ENCODE measurements at regions of chr3 and their contacts with region 1.

Region 1: GRCh38 chr3:161274719-161275298 is 53.7 kb downstream of the NMD3 start:
- DNase-seq: no peak
- H3K4me3 ChIP-seq: no peak overlapping the region
- H3K27ac ChIP-seq: no peak overlapping the region
- H3K4me1 ChIP-seq: no peaks in the 10 kb centered on the region
- H3K27me3 ChIP-seq: no peaks in the 10 kb centered on the region
- CTCF ChIP-seq: peak; percentile 63

Region 2: GRCh38 chr3:160956806-160957205 is 318.0 kb before region 1 on chr3:
- intact Hi-C with region 1: no loop called
- DNase-seq: no peak
- H3K4me3 ChIP-seq: no peak overlapping the region
- H3K27ac ChIP-seq: no peak overlapping the region
- H3K4me1 ChIP-seq: peaks cover 20% of the 10 kb centered on the region
- H3K27me3 ChIP-seq: no peaks in the 10 kb centered on the region
- CTCF ChIP-seq: peak; percentile 43

Region 3: DNA sequence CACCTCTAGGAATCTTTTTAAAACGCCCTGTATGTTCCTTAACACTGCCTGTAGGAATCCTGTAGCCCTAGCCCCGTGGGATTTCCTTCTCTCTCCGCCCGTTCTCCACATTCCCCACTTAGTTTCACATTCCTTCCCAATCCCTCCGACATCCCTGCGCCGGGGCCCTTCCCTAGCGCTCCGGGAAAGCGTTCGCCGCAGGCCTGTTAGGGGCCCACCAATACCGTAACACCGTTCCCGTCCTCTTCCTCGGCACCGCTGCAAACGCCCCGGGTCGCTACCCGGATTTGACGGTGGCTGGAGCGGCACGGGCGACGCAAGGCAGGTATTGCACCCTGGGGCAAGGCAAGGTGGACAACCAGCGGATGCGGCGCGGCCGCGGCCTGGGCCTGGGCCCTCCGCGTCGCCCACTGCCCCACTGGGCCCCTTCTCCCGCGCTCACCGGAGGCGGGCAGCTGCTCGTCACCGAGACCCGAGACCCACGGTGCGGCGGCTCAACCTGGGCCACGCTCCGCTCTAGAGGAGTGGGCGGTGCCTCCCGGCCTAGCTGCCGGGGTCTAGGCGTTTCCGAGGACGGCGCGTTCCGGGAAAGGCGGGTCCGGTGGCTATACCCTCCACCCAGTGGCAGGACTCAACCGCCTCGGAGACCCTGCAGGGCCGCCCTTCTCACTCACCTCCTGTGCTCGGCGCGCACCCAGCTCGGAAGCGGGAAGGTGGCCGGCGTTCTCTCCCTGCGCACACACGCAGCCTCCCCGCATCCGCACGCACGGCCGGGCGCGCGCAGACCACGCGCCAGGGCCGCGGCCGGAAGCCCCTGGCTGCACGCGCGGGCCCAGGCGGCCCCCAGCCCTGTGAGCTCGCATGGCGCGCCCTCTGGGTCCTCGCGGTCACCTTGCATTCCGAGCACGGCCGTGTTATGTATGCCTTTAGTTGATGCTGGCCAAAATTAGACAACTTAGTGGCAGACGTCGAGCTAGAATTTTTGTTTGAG is 170.0 kb before region 1 on chr3 and contains the start of gene B3GALNT1:
- intact Hi-C with region 1: no loop called
- DNase-seq: peak; percentile 61
- H3K4me3 ChIP-seq: peak within 1 kb of the TSS; percentile 89
- H3K27ac ChIP-seq: peak within 1 kb of the TSS; percentile 91
- H3K4me1 ChIP-seq: peaks cover 54% of the 10 kb centered on the region
- H3K27me3 ChIP-seq: no peaks in the 10 kb centered on the region
- CTCF ChIP-seq: no peak
- total RNA-seq, gene B3GALNT1: 56.1 TPM

Region 4: GRCh38 chr3:161371430-161372326 is 96.9 kb after region 1 on chr3 and contains the start of gene SPTSSB:
- intact Hi-C with region 1: no loop called
- DNase-seq: peak; percentile 19
- H3K4me3 ChIP-seq: peak within 1 kb of the TSS; percentile 70
- H3K27ac ChIP-seq: no peak within 1 kb of the TSS
- H3K4me1 ChIP-seq: peaks cover 23% of the 10 kb centered on the region
- H3K27me3 ChIP-seq: peaks cover 60% of the 10 kb centered on the region
- CTCF ChIP-seq: no peak
- total RNA-seq, gene SPTSSB: 0.25 TPM

Region 5: GRCh38 chr3:161423911-161424522 is 149.2 kb after region 1 on chr3:
- intact Hi-C with region 1: loop called (anchors 5 kb)
- DNase-seq: no peak
- H3K4me3 ChIP-seq: no peak overlapping the region
- H3K27ac ChIP-seq: no peak overlapping the region
- H3K4me1 ChIP-seq: peaks cover 4% of the 10 kb centered on the region
- H3K27me3 ChIP-seq: no peaks in the 10 kb centered on the region
- CTCF ChIP-seq: peak; percentile 85